ENCODE measurements at regions of chr14 and their contacts with region 1.

Region 1: DNA sequence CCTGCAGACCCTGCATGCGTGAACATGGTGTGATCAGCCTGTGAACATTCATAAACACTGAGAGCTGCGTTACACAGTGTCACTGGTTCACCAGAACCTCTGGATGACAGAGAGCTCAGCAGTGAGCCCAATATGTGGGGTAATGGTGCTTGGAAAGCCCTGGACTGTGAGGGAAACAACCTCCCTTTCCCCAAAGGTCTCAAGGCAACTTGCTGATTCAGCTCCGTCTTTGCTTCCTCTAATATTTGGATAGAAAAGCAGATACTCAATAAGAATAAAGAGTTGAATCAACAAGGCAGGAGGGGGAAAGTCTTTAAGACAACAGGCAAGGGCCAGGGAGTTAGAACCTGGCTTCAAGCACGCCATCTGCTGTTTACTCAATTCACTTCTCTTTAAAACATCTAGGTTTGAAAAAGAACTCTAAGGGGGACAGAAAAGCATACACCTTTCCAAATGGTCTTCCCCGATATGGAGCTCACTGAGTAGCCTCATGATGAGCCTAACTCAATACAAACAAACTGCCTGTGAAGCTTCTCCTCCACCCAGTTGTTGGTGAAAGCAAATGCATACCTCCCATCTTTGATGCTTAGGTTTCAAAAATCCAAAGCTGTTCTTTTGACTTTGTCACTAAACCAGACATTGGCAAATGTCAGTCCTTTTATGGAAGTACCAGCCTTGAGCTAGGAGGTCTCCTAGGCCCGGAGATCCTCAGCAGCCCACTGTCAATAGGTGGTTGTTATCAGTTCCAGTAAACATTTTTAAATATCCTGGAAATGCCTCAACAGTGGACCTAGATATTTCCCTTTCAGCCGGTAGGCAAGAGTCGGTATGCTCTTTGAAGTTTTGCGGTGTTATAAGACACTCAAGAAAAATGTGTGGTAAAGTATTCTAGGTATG is 76.1 kb downstream of the SAMD4A start:
- DNase-seq: peak in 1 of 2 experiments; percentile 44
- H3K4me3 ChIP-seq: no peak overlapping the region
- H3K27ac ChIP-seq: no peak overlapping the region
- H3K4me1 ChIP-seq: peaks cover 0 to 9% (median 6%) of the 10 kb centered on the region in 4 experiments; a peak in 3 of 7 replicates
- H3K27me3 ChIP-seq: no peaks in the 10 kb centered on the region
- CTCF ChIP-seq: peak in 2 of 3 experiments; percentile 20 to 46; a peak in 2 of 4 replicates
- EP300 ChIP-seq: no peak
- POLR2A ChIP-seq: no peak
- RAD21 ChIP-seq: peak; percentile 53 to 54

Region 2: GRCh38 chr14:54625112-54625511 is 17.9 kb before region 1 on chr14:
- CTCF ChIA-PET with region 1: interaction called, 22 read pairs
- POLR2A ChIA-PET with region 1: interaction called, 7 read pairs
- DNase-seq: no peak
- H3K4me3 ChIP-seq: no peak overlapping the region
- H3K27ac ChIP-seq: no peak overlapping the region
- H3K4me1 ChIP-seq: peaks cover 0 to 15% (median 7%) of the 10 kb centered on the region in 4 experiments; a peak in 5 of 7 replicates
- H3K27me3 ChIP-seq: no peaks in the 10 kb centered on the region
- CTCF ChIP-seq: no peak
- EP300 ChIP-seq: no peak
- POLR2A ChIP-seq: no peak
- RAD21 ChIP-seq: no peak

Region 3: GRCh38 chr14:54631016-54631415 is 12.0 kb before region 1 on chr14:
- CTCF ChIA-PET with region 1: interaction called, 22 read pairs
- POLR2A ChIA-PET with region 1: interaction called, 8 read pairs
- DNase-seq: no peak
- H3K4me3 ChIP-seq: no peak overlapping the region
- H3K27ac ChIP-seq: no peak overlapping the region
- H3K4me1 ChIP-seq: peaks cover 0 to 7% (median 5%) of the 10 kb centered on the region in 4 experiments; a peak in 5 of 7 replicates
- H3K27me3 ChIP-seq: no peaks in the 10 kb centered on the region
- CTCF ChIP-seq: no peak
- EP300 ChIP-seq: no peak
- POLR2A ChIP-seq: no peak
- RAD21 ChIP-seq: no peak

Region 4: DNA sequence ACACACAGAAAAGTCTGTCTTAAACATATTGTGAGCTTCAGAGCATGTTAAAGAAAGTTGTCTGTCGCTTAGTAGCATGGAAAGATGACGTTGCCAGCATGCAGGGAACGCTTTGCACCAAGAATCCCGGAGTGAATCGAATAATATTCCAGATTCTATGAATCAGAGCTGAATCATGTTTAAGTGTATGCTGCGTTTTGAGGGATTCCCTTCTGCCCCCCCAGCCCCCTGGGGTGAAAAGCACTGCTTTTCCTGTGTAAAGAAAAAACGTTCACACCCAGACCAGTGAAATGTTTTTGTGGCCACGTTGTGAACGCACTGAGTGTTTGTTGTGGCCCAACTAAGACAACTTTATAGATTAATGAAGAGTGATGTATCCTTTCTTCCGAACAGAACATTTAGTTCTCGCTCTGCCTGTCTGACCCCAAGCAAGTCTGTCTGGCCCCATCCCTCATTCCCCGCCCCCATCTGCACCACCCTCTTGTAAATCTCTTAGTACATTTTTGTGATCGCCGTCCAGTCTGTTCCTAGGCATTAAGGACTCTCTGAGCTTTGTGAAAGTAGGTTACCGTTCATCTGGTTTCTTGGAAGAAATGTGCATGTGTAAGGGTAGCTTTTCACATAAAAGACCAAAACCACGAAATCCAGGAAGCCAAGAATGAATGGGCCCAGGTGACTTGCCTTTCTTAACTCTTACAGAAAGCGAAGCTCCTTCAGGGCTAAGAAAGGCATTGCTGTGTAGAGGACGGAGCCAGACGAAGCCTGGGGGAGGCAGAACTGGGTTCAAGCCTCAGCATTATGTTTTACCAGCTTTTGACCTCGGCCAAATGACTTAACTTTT is 26.9 kb after region 1 on chr14:
- CTCF ChIA-PET with region 1: interaction called, 19 read pairs
- POLR2A ChIA-PET with region 1: interaction called, 4 read pairs
- DNase-seq: no peak
- H3K4me3 ChIP-seq: no peak overlapping the region
- H3K27ac ChIP-seq: no peak overlapping the region
- H3K4me1 ChIP-seq: peaks cover 8 to 18% (median 13%) of the 10 kb centered on the region in 4 experiments
- H3K27me3 ChIP-seq: no peaks in the 10 kb centered on the region
- CTCF ChIP-seq: no peak
- EP300 ChIP-seq: no peak
- POLR2A ChIP-seq: no peak
- RAD21 ChIP-seq: no peak